Psoas muscle (tissue), 8 donors: ENCODE measurements at regions of chr13 and their contacts with region 1.

Region 1: DNA sequence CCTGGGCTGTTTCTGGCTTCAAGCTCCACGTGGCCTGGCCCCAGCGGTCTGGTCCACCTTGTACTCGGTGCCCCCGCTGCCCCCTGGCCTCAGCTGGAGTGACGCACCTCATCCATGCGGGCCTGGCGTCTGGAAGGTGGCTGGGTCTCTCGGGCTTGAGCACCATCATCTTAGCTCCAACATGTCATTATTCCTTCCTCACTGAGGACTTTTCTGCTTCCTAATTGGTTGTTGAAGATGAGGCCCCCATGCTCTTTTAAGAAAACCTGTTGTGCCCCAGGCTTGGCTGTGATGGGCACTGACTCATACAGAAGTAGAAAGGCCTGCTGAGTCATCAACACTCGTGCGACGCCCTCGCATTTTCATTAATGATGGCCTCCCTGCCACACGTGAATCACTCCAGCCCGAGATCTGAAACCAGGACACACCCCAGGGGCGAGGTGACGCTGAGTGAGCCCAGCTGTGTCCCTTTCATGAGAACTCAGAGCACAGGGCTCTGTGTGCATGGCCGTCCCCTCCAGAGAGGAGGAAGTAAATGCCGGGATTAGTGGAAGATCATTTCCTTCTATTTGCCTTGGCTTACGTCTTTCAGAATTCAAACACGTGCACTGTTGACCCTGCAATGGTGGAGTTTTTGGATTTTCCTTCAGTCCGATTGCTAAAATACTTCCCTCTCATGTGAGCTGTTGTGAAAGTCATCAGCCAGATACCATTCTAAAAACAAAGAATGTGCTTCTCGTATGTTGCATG is 14.0 kb upstream of the GJA3 start:
- DNase-seq: peak; percentile 74 to 77
- ATAC-seq: peak; percentile 67 to 77 (median 76)
- H3K4me3 ChIP-seq: no peak overlapping the region
- H3K27ac ChIP-seq: no peak overlapping the region
- H3K4me1 ChIP-seq: no peaks in the 10 kb centered on the region
- H3K27me3 ChIP-seq: peaks cover 0 to 70% (median 15%) of the 10 kb centered on the region in 3 donors
- CTCF ChIP-seq: no peak

Region 2: DNA sequence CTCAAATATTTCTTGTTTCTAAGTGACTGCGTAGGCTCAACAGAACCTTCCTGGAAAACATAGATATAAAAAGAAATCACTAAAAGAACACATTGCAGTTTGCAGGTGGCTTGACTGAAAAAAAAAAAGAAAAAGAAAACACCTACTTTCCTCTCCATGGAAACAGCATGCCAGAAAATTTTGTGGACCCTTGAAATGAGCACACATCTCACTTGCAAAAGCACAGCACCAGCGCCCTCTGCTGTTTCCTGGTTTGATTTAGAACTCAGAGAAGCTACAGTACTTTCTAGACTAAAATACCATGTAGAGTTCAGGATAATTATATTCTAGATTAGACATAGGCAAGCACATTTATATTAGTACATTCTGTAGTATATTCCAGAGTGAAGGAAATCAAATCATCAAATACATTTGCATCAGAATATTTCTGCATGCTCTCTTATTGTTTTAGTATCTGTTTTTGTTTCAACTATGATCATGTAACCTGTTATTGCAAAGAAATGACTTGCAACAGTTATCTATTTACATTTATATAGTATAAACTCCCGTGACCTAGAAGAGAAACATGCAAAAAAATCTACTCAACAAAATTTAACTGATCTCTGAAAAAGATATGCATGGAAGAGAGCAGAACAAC is 750.0 kb after region 1 on chr13:
- intact Hi-C with region 1: loop called in 1 of 2 experiments (anchors 10 kb)
- DNase-seq: peak; percentile 65 to 79
- ATAC-seq: peak; percentile 55 to 83 (median 68)
- H3K4me3 ChIP-seq: no peak overlapping the region
- H3K27ac ChIP-seq: no peak overlapping the region
- H3K4me1 ChIP-seq: no peaks in the 10 kb centered on the region
- H3K27me3 ChIP-seq: no peaks in the 10 kb centered on the region
- CTCF ChIP-seq: peak; percentile 82